Activated CD4-positive, alpha-beta T cell treated with anti-CD3 and anti-CD28 coated beads for 36 hours (primary cell): ENCODE measurements at regions of chr10 and their contacts with region 1.

Region 1: GRCh38 chr10:34666008-34666705 is 148.9 kb downstream of the PARD3 start:
- DNase-seq: peak; percentile 9
- ATAC-seq: peak; percentile 60
- H3K4me3 Mint-ChIP-seq: no peak overlapping the region
- H3K27ac Mint-ChIP-seq: no peak overlapping the region
- H3K4me1 Mint-ChIP-seq: no peaks in the 10 kb centered on the region
- H3K27me3 Mint-ChIP-seq: peaks cover 2% of the 10 kb centered on the region

Region 2: DNA sequence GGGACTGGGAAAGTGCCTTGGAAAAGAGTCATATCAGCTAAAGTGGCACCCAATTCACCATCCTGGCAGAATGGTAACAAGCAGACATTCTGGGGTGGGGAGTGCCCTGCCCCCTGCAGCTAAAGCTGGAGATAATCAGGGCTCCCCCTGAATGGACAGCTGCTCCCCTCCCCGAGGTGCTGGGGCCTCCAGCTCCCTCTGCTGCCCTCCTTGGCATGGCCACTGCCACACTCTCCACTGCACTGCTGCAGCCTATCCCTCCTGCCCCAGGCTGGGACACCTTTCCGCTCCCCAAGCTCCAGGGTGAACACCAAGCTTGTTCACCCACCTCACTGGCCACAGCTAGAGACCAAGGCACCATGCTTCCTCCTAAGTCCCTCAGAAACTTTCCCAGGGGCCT is 158.7 kb after region 1 on chr10:
- CTCF ChIA-PET with region 1: no interaction called
- POLR2A ChIA-PET with region 1: no interaction called
- intact Hi-C with region 1: loop called in 1 of 2 experiments (anchors 5 kb)
- DNase-seq: peak; percentile 7
- ATAC-seq: no peak
- H3K4me3 Mint-ChIP-seq: no peak overlapping the region
- H3K27ac Mint-ChIP-seq: no peak overlapping the region
- H3K4me1 Mint-ChIP-seq: no peaks in the 10 kb centered on the region
- H3K27me3 Mint-ChIP-seq: peaks cover 9% of the 10 kb centered on the region